ENCODE measurements at regions of chr22 and their contacts with region 1.

Region 1: DNA sequence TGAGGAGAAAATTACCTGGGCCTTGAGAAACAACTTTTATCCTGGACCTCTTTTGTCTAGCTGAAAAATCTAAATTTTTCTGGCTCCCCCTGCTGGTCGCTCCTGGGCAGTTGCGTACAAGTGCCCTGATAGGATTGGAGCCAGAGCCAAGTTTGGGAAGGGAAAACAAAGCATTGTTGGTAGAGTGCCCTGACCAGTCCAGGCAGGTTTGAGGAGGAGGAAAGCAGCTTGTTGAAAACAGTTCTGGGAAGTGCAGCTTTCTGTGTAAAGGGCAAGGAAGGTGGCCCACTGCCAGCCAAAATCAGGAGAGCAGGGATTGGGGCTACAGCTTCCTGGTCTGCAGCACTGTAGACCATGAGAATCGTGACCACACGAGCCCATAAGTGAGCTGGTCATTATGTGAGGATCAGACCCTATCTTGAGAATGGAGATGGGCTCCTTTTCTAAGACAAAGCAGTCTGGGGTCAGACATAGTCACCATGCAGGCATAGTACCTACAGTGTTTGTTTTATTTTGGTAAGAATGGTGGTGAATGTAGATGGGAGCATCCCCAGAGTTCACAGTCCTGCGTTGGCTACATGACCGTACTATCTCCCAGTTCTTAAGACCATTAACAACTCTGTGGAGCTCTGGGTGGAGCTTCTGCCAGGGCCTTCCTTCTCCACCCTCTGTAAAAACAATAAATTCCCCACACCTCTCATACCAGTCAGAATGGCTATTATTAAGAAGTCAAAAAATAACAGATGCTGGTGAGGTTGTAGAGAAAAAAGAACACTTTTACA is 21.3 kb upstream of the PIK3IP1 start:
- DNase-seq: no peak
- H3K4me3 ChIP-seq: no peak overlapping the region
- CTCF ChIP-seq: peak; percentile 73

Region 2: DNA sequence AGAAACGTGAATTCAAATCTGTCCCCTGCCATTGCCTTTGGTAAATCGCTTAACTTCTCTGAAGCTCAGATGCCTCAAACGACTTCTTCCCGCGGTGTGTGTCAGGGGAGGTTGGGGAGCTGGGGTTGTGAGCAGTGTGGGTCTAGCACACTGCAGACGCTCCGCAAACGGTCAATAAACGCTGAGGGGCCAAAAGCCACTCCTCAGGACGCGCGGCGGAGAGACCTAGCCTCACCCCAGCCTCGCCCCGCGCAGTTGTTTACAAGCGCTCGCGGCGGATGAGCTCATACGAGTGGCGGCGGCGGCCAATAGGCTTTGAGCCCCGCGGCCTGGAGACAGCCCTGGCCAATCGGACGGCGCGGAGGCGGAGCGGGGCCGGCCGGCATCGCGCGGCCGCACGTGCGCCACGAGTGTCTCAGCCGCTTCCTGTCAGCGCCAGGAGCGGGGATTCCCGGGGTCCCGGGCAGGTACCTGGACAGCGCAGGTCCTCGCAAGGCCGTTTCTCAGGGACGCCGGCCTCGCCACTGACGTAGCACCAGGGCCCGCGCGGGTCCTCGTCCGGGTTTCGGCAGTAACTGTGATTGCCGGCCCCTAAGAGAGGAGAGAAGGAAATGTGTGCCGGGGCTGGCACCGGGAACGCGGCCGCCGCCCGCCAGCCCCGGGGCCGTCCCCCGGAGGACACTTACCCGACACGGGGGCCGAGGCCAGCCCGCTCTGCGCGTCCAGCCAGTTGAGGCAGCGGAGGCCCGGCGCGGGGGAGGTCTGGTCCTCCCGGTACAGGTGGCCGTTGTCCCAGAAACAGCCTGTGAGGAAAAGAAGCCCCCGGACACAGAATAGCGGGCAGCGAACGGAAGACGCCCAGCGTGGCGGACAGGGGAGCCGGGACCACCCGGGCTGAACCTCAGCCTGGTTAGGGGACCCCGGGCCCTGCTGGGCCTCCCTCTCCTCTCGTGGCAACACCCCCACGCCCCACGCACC is 22.8 kb before region 1 on chr22:
- CTCF ChIA-PET with region 1: interaction called, 262 read pairs
- POLR2A ChIA-PET with region 1: interaction called, 3 read pairs
- DNase-seq: no peak
- H3K4me3 ChIP-seq: peak overlapping the region; percentile 56
- CTCF ChIP-seq: no peak

Region 3: DNA sequence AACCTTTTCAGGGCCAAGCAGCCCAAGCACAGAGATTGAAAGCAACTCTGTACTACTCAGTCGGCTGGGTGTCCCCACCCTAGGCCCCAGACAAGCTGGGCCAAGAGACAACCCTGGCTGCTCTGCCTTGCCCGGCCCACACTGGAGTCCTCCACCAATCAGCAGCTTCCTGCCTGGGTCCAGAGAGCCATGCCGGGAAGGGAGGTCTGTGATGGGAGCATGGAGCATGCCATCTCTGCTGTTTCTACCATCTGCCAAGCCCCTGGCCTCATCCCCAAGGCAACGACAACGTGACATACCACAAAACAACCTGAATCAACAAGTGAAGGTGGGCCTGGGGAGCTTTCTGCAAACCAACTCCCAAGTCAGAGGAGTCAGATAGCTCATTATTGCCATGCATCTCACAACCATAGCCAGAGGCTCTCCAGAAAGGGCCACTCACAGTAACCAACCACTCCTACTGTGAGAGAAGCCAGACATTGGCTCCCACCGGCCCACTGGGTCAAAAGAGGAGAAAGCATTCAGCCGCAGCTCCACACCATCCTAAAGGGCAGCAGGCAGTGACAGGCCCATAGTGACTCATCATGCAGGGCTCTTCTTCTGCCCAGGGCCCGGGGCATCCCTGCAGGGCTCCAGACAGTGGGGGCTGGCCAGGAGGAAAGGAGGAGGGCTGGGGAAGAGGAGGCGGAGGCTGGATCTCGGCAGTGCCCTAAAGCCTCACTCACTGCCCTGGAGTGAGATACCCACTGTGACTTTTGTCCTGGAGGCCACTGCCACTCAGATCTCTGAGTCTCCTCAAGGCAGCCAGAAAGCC is 14.5 kb after region 1 on chr22:
- CTCF ChIA-PET with region 1: interaction called, 67 read pairs
- POLR2A ChIA-PET with region 1: no interaction called
- DNase-seq: no peak
- H3K4me3 ChIP-seq: no peak overlapping the region
- CTCF ChIP-seq: no peak

Region 4: GRCh38 chr22:31337161-31337560 is 23.6 kb after region 1 on chr22:
- CTCF ChIA-PET with region 1: interaction called, 53 read pairs
- POLR2A ChIA-PET with region 1: no interaction called
- DNase-seq: no peak
- H3K4me3 ChIP-seq: no peak overlapping the region
- CTCF ChIP-seq: no peak

Region 5: GRCh38 chr22:31345331-31346254 is 32.0 kb after region 1 on chr22:
- CTCF ChIA-PET with region 1: interaction called, 17 read pairs
- POLR2A ChIA-PET with region 1: interaction called, 4 read pairs
- DNase-seq: no peak
- H3K4me3 ChIP-seq: peak overlapping the region; percentile 70
- CTCF ChIP-seq: peak; percentile 90

Measured in AG04449 (cell line).